Endothelial cell of umbilical vein (primary cell): ENCODE measurements at regions of chr3 and their contacts with region 1.

Region 1: GRCh38 chr3:192514081-192514753 is 213.1 kb downstream of the FGF12 start:
- DNase-seq: peak; percentile 40
- H3K4me3 ChIP-seq: peak overlapping the region in 1 of 3 experiments; percentile 19
- H3K27ac ChIP-seq: no peak overlapping the region
- H3K4me1 ChIP-seq: no peaks in the 10 kb centered on the region
- H3K27me3 ChIP-seq: peaks cover 21 to 39% of the 10 kb centered on the region in 2 experiments
- CTCF ChIP-seq: no peak
- POLR2A ChIP-seq: no peak

Region 2: DNA sequence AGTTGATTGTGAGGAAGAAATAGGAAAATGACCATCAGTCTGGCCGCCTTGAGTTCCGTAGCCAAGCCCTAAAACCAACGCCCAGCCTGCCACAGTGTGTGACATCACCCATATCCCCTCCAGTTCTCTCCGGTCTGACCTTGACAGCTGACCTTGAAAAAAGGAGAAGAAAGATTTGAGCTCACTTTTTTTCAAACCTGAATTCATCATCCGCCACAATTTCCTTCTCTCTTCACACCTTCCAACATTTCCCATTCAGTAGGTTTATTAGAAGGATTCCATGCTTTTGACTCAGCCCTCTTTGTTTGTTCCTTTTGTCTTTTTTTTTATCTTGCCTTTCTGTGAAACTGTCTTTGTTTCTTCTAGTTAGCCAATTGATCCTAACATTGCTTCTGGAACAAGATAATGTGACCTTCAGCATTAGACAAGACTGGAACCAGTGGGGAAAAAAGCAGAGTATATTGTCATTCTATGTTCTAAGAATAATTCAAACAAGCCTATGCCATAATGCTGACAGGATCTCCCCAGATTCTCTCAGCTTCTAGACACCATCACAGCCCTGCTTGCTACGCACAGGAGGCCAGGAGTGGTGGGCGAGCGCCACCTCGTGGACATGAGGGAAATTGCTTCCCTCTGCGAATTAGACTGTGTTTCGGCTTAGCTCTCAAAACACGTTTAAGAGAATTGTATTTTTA is 70.0 kb before region 1 on chr3:
- CTCF ChIA-PET with region 1: no interaction called
- POLR2A ChIA-PET with region 1: no interaction called
- dilution Hi-C with region 1: no loop called
- intact Hi-C with region 1: no loop called
- DNase-seq: peak; percentile 78
- H3K4me3 ChIP-seq: no peak overlapping the region
- H3K27ac ChIP-seq: no peak overlapping the region
- H3K4me1 ChIP-seq: peaks cover 3% of the 10 kb centered on the region
- H3K27me3 ChIP-seq: peaks cover 15 to 35% of the 10 kb centered on the region in 2 experiments
- CTCF ChIP-seq: peak; percentile 96
- POLR2A ChIP-seq: no peak

Region 3: GRCh38 chr3:192727032-192727847 is 213.0 kb after region 1 on chr3 and contains the start of gene FGF12:
- CTCF ChIA-PET with region 1: no interaction called
- POLR2A ChIA-PET with region 1: no interaction called
- dilution Hi-C with region 1: no loop called
- intact Hi-C with region 1: loop called (anchors 1 kb)
- DNase-seq: peak; percentile 5
- H3K4me3 ChIP-seq: no peak within 1 kb of the TSS
- H3K27ac ChIP-seq: no peak within 1 kb of the TSS
- H3K4me1 ChIP-seq: no peaks in the 10 kb centered on the region
- H3K27me3 ChIP-seq: peaks cover 0 to 5% of the 10 kb centered on the region in 2 experiments
- CTCF ChIP-seq: no peak
- POLR2A ChIP-seq: no peak
- total RNA-seq, gene FGF12: 1.1 and 2.5 TPM in 2 replicates